ENCODE measurements at regions of chr4 and their contacts with region 1.

Region 1: GRCh38 chr4:6546681-6547447 is 28.1 kb upstream of the MAN2B2 start:
- DNase-seq: no peak
- H3K4me3 ChIP-seq: no peak overlapping the region
- H3K27me3 ChIP-seq: peaks cover 3% of the 10 kb centered on the region; the same call in 1 of the 2 replicates
- CTCF ChIP-seq: peak; percentile 90

Region 2: DNA sequence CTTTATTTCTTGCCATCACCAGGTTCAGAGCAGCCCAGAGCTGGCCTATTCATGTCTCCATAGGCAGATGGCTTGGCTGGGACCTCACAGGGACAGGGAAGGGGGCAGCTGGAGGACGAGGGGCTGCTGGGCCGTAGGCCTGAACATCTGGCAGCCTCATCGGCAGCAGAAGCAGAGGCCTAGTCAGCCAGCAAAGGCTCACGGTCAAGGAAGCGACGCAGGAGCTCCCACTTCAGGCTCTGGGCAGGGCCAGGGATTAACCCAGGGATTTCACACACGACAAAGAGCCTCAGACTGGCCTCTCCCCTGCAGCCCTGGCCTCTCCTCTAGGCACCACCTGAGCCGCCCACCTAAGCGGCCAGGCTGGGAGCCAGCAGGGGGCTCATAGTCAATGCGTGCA is 17.8 kb before region 1 on chr4:
- CTCF ChIA-PET with region 1: interaction called, 12 read pairs
- POLR2A ChIA-PET with region 1: interaction called, 4 read pairs
- DNase-seq: no peak
- H3K4me3 ChIP-seq: no peak overlapping the region
- H3K27me3 ChIP-seq: no peaks in the 10 kb centered on the region; the same call in 1 of the 2 replicates
- CTCF ChIP-seq: no peak

Region 3: DNA sequence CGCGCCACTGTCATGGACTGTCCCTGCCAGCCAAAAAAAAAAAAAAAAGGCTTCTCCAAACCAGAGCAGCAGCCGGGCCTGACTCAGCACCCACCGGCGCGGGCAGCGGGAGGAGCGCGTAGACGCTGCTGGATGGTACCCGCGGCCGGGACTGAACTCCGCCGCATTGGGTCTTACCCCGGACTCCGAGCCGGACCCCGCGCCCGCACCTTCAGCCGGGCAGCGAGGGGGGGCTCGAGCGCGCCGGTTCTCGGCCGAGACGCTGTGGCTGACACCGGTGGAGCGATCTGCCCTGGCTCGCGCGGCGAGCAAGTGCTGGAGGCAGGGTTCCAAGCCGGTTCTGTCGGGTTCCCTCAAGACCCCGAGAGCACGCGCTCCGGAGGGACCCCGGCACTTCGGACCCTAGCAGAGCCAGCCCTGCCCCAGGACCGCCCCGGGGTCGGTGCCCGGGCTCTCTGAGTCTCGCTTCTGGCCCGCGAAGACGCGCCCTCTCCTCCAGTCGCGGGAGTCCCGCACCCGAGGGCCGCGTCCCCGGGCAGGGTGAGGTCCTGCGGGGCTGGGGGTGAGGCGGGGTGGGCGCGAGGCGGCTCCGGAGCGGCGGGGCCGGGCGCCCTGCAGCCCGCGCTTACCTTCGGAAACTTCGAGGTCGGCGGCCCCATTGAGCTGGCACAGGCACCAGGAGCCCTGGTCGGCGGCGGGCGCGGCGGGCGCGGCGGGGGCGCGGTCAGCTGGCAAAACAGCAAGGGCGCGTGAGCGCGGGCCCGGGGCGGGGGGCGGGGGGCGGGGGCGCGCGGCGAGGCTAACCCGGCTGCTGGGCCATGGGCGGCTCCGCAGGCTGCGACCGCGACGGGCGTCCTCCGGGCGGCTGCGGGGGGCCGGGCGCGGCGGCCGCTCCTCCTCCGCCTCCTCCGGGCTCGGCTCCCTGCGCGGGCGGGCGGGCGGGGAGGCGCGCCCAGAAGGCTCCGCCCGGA is 16.4 kb after region 1 on chr4:
- CTCF ChIA-PET with region 1: interaction called, 17 read pairs
- POLR2A ChIA-PET with region 1: no interaction called
- DNase-seq: no peak
- H3K4me3 ChIP-seq: peak overlapping the region; percentile 16; the same call in 1 of the 2 replicates
- H3K27me3 ChIP-seq: peaks cover 36% of the 10 kb centered on the region
- CTCF ChIP-seq: no peak

Measured in BJ (cell line).